ENCODE measurements at regions of chr9 and their contacts with region 1.

Region 1: GRCh38 chr9:72038890-72039410 is 21.5 kb downstream of the C9orf57 start:
- DNase-seq: peak; percentile 40 to 53 (median 49)
- H3K4me3 ChIP-seq: no peak overlapping the region
- H3K4me3 Mint-ChIP-seq: peak overlapping the region in 3 of 8 donors; percentile 31 to 49 (median 48)
- H3K27ac ChIP-seq: no peak overlapping the region
- H3K27ac Mint-ChIP-seq: peak overlapping the region in 2 of 7 donors; percentile 34 to 39
- H3K4me1 ChIP-seq: no peaks in the 10 kb centered on the region
- H3K4me1 Mint-ChIP-seq: peaks cover 4 to 6% (median 5%) of the 10 kb centered on the region in 4 donors
- H3K27me3 ChIP-seq: no peaks in the 10 kb centered on the region
- H3K27me3 Mint-ChIP-seq: peaks cover 9 to 12% of the 10 kb centered on the region in 2 donors

Region 2: DNA sequence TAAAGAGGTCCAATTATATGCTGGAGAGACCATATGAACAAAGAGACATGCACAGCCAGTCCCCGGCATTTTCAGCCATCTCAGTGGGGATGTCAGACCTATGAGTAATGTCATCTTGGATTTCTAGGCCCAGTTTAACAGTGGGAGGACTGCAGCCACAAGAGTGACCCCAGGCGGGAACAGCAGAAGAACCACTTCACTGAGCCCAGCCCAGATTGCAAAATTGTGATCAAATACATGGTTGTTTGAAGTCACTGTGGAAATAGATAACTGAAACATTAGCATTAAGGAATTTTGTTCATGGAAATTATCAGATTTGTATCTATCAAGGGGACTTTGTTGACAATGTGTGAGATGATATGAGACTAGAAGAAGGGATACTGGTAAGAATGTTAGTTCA is 63.6 kb after region 1 on chr9:
- CTCF ChIA-PET with region 1: no interaction called
- POLR2A ChIA-PET with region 1: no interaction called
- intact Hi-C with region 1: no loop called
- DNase-seq: no peak
- H3K4me3 ChIP-seq: no peak overlapping the region
- H3K4me3 Mint-ChIP-seq: no peak overlapping the region
- H3K27ac ChIP-seq: no peak overlapping the region
- H3K27ac Mint-ChIP-seq: no peak overlapping the region
- H3K4me1 ChIP-seq: no peaks in the 10 kb centered on the region
- H3K4me1 Mint-ChIP-seq: no peaks in the 10 kb centered on the region
- H3K27me3 ChIP-seq: no peaks in the 10 kb centered on the region
- H3K27me3 Mint-ChIP-seq: no peaks in the 10 kb centered on the region

Region 3: GRCh38 chr9:72271613-72272478 is 232.9 kb after region 1 on chr9:
- CTCF ChIA-PET with region 1: interaction called, 55 read pairs
- POLR2A ChIA-PET with region 1: no interaction called
- intact Hi-C with region 1: loop called (anchors 1 kb)
- DNase-seq: peak in 4 of 5 donors; percentile 18 to 28 (median 23)
- H3K4me3 ChIP-seq: no peak overlapping the region
- H3K4me3 Mint-ChIP-seq: no peak overlapping the region
- H3K27ac ChIP-seq: no peak overlapping the region
- H3K27ac Mint-ChIP-seq: no peak overlapping the region
- H3K4me1 ChIP-seq: no peaks in the 10 kb centered on the region
- H3K4me1 Mint-ChIP-seq: no peaks in the 10 kb centered on the region
- H3K27me3 ChIP-seq: no peaks in the 10 kb centered on the region
- H3K27me3 Mint-ChIP-seq: peaks cover 3 to 9% of the 10 kb centered on the region in 2 donors

Region 4: GRCh38 chr9:72280913-72281500 is 242.1 kb after region 1 on chr9:
- CTCF ChIA-PET with region 1: interaction called, 26 read pairs
- POLR2A ChIA-PET with region 1: no interaction called
- intact Hi-C with region 1: no loop called
- DNase-seq: peak; percentile 61 to 66 (median 64)
- H3K4me3 ChIP-seq: no peak overlapping the region
- H3K4me3 Mint-ChIP-seq: no peak overlapping the region
- H3K27ac ChIP-seq: no peak overlapping the region
- H3K27ac Mint-ChIP-seq: no peak overlapping the region
- H3K4me1 ChIP-seq: no peaks in the 10 kb centered on the region
- H3K4me1 Mint-ChIP-seq: no peaks in the 10 kb centered on the region
- H3K27me3 ChIP-seq: no peaks in the 10 kb centered on the region
- H3K27me3 Mint-ChIP-seq: peaks cover 0 to 1% of the 10 kb centered on the region in 2 donors

Region 5: DNA sequence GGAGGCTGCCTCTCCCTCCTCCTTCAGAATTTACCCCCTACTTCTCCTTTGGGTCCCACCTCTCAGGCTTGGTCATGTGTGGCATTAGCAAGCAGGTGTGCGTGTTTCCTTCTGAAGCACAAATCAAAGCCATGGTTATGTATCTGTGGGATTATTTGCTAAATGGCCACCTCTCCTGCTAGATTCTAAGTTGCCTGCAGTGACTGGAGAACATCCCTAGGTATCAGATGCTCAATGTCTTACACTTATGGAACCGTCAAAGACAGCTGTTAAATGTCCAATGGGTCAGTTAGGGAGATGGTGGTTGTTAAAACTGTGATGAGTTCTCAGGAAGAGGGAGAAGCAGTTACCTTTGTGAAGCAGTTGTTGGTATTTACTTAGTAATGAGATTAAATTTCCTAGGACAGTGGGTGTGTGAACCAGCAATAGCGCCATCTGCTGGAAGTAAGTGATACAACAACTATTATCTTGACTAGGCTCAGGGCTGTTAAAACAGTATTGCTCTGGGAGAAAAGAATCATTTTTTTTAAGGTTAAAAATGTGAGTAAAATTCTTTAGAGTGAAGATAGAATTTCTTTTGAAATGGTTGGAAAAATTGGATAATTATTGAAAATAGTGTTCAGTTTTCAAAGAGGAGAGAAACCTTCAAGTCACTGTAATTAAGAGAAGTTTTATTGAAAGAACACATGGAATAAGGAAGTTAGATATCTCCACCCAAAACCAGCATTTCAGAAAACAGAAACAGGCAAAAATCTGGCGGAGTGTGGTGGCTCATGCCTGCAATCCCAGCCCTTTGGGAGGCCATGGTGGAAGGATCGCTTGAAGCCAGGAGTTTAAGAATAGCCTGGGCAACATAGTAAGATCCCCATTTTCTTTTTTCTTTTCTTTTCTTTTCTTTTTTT is 553.8 kb after region 1 on chr9:
- CTCF ChIA-PET with region 1: no interaction called
- POLR2A ChIA-PET with region 1: no interaction called
- intact Hi-C with region 1: loop called (anchors 1 kb)
- DNase-seq: peak in 4 of 5 donors; percentile 50 to 58 (median 56)
- H3K4me3 ChIP-seq: no peak overlapping the region
- H3K4me3 Mint-ChIP-seq: no peak overlapping the region
- H3K27ac ChIP-seq: no peak overlapping the region
- H3K27ac Mint-ChIP-seq: no peak overlapping the region
- H3K4me1 ChIP-seq: peaks cover 7% of the 10 kb centered on the region
- H3K4me1 Mint-ChIP-seq: peaks cover 8 to 22% (median 10%) of the 10 kb centered on the region in 4 donors
- H3K27me3 ChIP-seq: no peaks in the 10 kb centered on the region
- H3K27me3 Mint-ChIP-seq: peaks cover 3 to 6% of the 10 kb centered on the region in 2 donors

Region 6: GRCh38 chr9:72827950-72828731 is 789.2 kb after region 1 on chr9:
- CTCF ChIA-PET with region 1: interaction called, 20 read pairs
- POLR2A ChIA-PET with region 1: no interaction called
- intact Hi-C with region 1: no loop called
- DNase-seq: no peak
- H3K4me3 ChIP-seq: no peak overlapping the region
- H3K4me3 Mint-ChIP-seq: no peak overlapping the region
- H3K27ac ChIP-seq: no peak overlapping the region
- H3K27ac Mint-ChIP-seq: no peak overlapping the region
- H3K4me1 ChIP-seq: no peaks in the 10 kb centered on the region
- H3K4me1 Mint-ChIP-seq: no peaks in the 10 kb centered on the region
- H3K27me3 ChIP-seq: no peaks in the 10 kb centered on the region
- H3K27me3 Mint-ChIP-seq: peaks cover 3 to 4% of the 10 kb centered on the region in 2 donors

Region 7: GRCh38 chr9:73023025-73023541 is 984.1 kb after region 1 on chr9:
- CTCF ChIA-PET with region 1: interaction called, 13 read pairs
- POLR2A ChIA-PET with region 1: no interaction called
- intact Hi-C with region 1: no loop called
- DNase-seq: peak; percentile 32 to 49 (median 35)
- H3K4me3 ChIP-seq: no peak overlapping the region
- H3K4me3 Mint-ChIP-seq: peak overlapping the region in 1 of 8 donors; percentile 12
- H3K27ac ChIP-seq: no peak overlapping the region
- H3K27ac Mint-ChIP-seq: no peak overlapping the region
- H3K4me1 ChIP-seq: peaks cover 4% of the 10 kb centered on the region
- H3K4me1 Mint-ChIP-seq: peaks cover 0 to 10% (median 6%) of the 10 kb centered on the region in 4 donors
- H3K27me3 ChIP-seq: no peaks in the 10 kb centered on the region
- H3K27me3 Mint-ChIP-seq: peaks cover 6 to 11% of the 10 kb centered on the region in 2 donors

Region 8: GRCh38 chr9:73081979-73082657 is 1043.2 kb after region 1 on chr9:
- CTCF ChIA-PET with region 1: no interaction called
- POLR2A ChIA-PET with region 1: no interaction called
- intact Hi-C with region 1: loop called (anchors 1 kb)
- DNase-seq: peak in 3 of 5 donors; percentile 11 to 28 (median 13)
- H3K4me3 ChIP-seq: no peak overlapping the region
- H3K4me3 Mint-ChIP-seq: no peak overlapping the region
- H3K27ac ChIP-seq: no peak overlapping the region
- H3K27ac Mint-ChIP-seq: no peak overlapping the region
- H3K4me1 ChIP-seq: no peaks in the 10 kb centered on the region
- H3K4me1 Mint-ChIP-seq: no peaks in the 10 kb centered on the region
- H3K27me3 ChIP-seq: no peaks in the 10 kb centered on the region
- H3K27me3 Mint-ChIP-seq: peaks cover 10 to 21% of the 10 kb centered on the region in 2 donors

Measured in CD4-positive, alpha-beta memory T cell (primary cell).